Activated CD4-positive, alpha-beta T cell treated with anti-CD3 and anti-CD28 coated beads, Interleukin-2, amount 10 ng/mL, durations not matched to agents 24 days and 14 days (primary cell): ENCODE measurements at regions of chr15 and their contacts with region 1.

Region 1: GRCh38 chr15:69413822-69414700 is at the start of gene KIF23:
- DNase-seq: peak; percentile 98
- H3K4me3 Mint-ChIP-seq: peak within 1 kb of the TSS; percentile 89
- H3K27ac Mint-ChIP-seq: peak within 1 kb of the TSS; percentile 86
- H3K4me1 Mint-ChIP-seq: peaks cover 33% of the 10 kb centered on the region
- H3K27me3 Mint-ChIP-seq: no peaks in the 10 kb centered on the region
- total RNA-seq, gene KIF23: 36.0 and 40.0 TPM in 2 replicates

Region 2: DNA sequence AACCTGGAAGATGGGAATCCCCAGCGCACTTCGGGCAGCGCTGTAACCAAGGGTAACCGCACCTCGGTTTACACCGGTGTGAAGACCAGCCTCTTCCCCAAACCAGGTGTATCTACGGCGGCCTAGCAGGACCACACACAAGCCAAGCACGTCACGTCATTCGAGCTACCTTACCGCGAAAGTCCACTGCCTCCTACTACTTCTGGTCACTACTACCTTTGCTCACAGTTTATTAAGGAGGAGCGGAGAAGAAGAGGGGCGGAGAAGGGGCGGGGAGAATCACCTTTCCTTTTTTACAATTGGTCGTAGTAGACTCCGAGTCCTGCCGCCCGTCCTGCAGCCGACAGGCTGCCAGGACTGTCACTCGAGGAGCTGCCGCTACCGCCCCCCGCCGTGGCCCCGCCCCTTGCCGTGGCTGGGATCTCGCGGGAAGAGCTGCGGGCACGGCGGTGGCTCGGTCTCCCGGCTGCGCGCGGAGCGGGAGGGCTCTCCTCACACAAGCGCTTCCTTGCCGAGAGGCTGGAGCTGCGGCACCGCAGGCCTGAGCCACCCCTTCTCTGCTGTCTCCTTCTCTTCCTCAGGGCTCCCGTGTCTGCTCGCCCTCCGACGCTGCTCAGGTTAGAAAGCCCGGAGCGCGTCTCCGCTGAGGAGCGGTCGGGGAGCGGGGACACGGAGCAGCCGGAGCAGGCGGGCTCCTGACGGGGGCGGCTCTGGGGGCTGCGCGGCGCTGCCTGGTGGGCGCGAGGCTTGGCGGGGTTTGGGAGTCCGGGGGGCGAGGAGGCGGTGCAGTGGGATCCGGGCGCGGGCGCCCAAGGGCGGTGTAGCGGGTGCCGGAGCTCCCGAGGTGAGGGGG is 253.7 kb before region 1 on chr15 and contains the start of gene GLCE:
- intact Hi-C with region 1: loop called (anchors 5 kb)
- DNase-seq: peak; percentile 99
- H3K4me3 Mint-ChIP-seq: peak within 1 kb of the TSS; percentile 95
- H3K27ac Mint-ChIP-seq: peak within 1 kb of the TSS; percentile 77
- H3K4me1 Mint-ChIP-seq: peaks cover 20% of the 10 kb centered on the region
- H3K27me3 Mint-ChIP-seq: peaks cover 47% of the 10 kb centered on the region
- total RNA-seq, gene GLCE: 2.5 and 3.8 TPM in 2 replicates

Region 3: GRCh38 chr15:69394556-69395282 is 19.3 kb before region 1 on chr15:
- intact Hi-C with region 1: no loop called
- DNase-seq: peak; percentile 95
- H3K4me3 Mint-ChIP-seq: peak overlapping the region; percentile 31
- H3K27ac Mint-ChIP-seq: no peak overlapping the region
- H3K4me1 Mint-ChIP-seq: peaks cover 9% of the 10 kb centered on the region
- H3K27me3 Mint-ChIP-seq: peaks cover 10% of the 10 kb centered on the region